ENCODE measurements at regions of chr17 and their contacts with region 1.

Region 1: DNA sequence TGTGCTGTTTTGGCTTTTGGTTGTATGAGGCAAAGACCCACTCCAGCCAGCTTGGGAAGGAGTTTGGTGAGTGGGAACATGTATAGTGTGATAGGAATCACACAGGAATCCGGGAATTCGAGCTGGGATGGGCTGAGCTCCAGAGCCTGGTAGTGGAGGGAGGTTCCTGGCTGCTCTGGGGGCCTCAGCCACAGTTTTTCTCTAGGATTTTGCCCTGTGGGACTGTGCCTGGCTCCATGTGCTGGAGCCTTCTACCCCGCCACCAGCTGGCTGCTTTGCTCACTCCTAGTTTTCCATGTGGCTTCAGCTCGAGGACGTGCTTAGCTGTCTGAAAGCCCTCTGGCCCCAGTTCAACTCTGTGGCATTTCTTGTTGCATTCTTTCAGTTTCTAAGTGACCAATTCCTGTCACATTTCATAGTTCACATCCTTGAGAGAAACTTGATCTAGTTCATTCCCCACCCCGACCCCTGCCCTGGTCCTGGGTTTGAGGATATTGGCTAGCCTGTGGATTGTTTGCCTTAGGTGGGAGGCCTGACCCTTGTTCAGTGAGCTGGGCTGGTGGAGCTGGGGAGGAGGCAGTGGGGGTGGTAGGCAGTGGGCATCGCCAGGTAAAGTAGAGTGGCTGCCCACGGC is 5.0 kb downstream of the SEC14L1 start:
- DNase-seq: peak; percentile 46
- H3K4me3 ChIP-seq: peak overlapping the region; percentile 93
- H3K27ac ChIP-seq: peak overlapping the region; percentile 95
- H3K4me1 ChIP-seq: peaks cover 80% of the 10 kb centered on the region
- CTCF ChIP-seq: no peak

Region 2: DNA sequence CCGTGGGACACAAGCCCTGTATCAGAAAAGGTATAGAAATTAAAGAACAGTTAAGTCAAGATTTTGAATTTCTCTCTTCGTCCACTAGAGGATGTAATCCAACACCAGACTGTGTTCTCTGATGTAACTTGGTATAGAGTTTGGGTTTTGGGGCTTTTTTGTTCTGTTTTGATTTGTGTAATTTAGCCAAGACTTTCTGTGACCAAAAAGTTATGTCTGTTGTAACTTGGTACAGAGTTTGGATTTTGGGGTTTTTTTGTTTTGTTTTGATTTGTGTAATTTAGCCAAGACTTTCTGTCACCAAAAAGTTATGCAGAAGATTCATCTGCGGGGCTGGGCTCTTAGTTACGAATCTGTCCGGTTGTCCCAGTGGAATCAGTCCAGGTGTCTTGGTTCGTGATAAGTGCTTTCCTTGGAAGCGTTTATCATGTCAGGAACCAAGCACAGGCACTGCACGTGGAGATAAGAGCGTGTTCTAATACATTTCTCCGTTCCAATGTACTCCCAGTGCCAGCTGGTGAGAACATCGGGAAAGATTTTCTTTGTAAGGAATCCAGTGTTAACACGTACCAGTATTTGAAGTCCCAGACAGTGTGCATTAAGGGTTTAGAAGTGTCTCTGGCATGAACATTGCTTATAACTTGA is 49.0 kb before region 1 on chr17:
- CTCF ChIA-PET with region 1: no interaction called
- POLR2A ChIA-PET with region 1: interaction called, 5 read pairs
- intact Hi-C with region 1: loop called (anchors 2 kb)
- DNase-seq: peak; percentile 72
- H3K4me3 ChIP-seq: no peak overlapping the region
- H3K27ac ChIP-seq: no peak overlapping the region
- H3K4me1 ChIP-seq: peaks cover 14% of the 10 kb centered on the region
- CTCF ChIP-seq: peak; percentile 96

Region 3: DNA sequence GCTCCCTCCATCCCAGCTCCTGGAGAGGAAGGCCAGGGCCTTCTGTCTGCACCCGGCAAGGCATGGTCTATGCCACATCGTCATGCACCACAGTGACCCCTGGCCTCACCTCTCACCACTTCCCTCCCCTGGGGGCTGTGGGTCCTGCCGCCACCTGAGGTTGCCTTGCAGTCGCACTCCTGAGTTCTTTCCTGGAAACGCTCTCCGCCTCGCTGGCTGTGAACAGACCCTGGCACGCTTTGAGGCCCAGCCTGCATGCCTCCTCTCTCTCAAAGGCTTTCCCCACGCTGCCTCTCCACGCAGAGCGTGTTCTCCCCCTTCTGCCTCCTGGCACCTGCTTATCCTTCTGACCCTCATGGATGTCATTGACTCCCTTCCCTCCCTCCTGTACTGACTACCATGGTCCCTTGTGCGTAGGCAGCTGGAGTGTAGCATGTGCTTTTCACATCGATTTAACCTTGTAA is 40.4 kb after region 1 on chr17:
- CTCF ChIA-PET with region 1: interaction called, 3 read pairs
- POLR2A ChIA-PET with region 1: interaction called, 6 read pairs
- intact Hi-C with region 1: loop called (anchors 2 kb)
- DNase-seq: peak; percentile 34
- H3K4me3 ChIP-seq: no peak overlapping the region
- H3K27ac ChIP-seq: no peak overlapping the region
- H3K4me1 ChIP-seq: peaks cover 82% of the 10 kb centered on the region
- CTCF ChIP-seq: no peak

Region 4: GRCh38 chr17:77212081-77212834 is 66.5 kb after region 1 on chr17:
- CTCF ChIA-PET with region 1: interaction called, 13 read pairs
- POLR2A ChIA-PET with region 1: interaction called, 13 read pairs
- intact Hi-C with region 1: loop called (anchors 1 kb)
- DNase-seq: peak; percentile 92
- H3K4me3 ChIP-seq: peak overlapping the region; percentile 54
- H3K27ac ChIP-seq: peak overlapping the region; percentile 87
- H3K4me1 ChIP-seq: peaks cover 53% of the 10 kb centered on the region
- CTCF ChIP-seq: no peak

Region 5: DNA sequence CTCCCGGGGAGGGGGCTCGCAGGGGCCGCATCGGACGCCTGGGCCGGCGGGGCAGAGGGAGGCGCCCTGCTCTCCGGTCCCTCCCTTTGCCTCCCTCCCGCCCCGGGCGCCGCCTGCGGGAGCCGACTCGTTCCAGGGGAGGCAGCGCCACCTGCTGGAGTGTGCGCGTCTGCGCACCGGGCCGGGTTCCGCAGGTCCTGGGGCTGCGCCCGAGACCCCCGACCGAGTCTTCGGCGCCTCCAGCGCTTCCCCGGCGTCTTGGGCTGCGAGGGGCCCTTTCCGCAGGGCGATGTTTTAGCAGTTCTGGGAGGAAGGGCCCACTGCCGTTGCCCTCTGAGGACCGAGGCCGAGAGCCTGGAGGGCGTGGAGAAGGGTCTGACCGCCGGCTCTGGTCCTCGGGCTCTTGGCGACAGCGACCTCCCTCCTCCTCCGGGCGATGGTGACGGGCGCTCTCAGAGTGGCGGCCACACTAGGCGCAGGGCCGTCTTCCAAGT is 101.4 kb after region 1 on chr17:
- CTCF ChIA-PET with region 1: no interaction called
- POLR2A ChIA-PET with region 1: no interaction called
- intact Hi-C with region 1: loop called (anchors 2 kb)
- DNase-seq: peak; percentile 91
- H3K4me3 ChIP-seq: peak overlapping the region; percentile 61
- H3K27ac ChIP-seq: no peak overlapping the region
- H3K4me1 ChIP-seq: peaks cover 14% of the 10 kb centered on the region
- CTCF ChIP-seq: peak; percentile 94

Measured in OCI-LY7 (cell line).